Posterior vena cava (tissue), 2 donors: ENCODE measurements at regions of chrX and their contacts with region 1.

Region 1: DNA sequence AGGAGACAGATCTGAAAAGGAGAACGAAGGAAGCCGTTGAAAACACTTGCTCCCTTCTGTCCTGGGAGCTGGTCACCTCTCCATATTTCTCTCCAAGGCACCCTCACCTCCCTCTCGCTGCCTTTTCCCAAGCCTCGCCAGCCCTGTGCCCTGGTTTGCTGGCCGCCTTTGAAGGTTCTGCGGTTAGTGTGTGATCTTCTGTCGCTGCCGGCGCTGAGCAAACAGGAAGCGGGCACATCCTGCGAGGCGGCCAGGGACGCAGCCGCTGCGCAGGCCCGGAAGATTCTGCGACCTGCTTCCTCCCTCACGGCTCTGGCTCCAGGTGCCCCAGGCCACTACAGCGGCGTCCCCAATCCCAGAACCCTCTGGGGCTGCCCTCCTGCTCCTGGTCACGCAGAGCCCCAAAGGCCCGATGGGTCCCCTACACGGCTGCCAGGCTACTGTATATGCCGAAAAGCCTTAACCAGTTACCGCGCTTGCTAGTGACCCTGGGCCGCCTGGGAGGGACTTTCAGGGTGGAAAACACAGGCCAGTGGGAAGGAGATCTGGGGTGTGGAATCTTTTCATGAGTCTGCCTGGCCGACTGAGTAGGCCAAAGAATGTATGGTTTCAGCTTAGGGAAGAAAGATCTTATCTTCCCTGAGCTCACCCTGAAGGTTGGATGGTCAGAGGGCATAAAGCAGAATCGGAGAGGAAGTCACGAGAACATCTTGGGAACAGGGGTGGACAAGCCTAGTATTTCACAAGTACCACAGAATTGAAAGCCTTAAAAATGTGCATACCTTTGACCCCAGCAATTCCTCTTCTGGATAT is 2.3 kb upstream of the SASH3 start:
- DNase-seq: peak; percentile 86

Region 2: GRCh38 chrX:129754056-129755024 is 23.1 kb before region 1 on chrX:
- intact Hi-C with region 1: loop called in 1 of 2 experiments (anchors 1 kb)
- DNase-seq: peak; percentile 76